Heart right ventricle (tissue), 16 donors: ENCODE measurements at regions of chr12 and their contacts with region 1.

Region 1: DNA sequence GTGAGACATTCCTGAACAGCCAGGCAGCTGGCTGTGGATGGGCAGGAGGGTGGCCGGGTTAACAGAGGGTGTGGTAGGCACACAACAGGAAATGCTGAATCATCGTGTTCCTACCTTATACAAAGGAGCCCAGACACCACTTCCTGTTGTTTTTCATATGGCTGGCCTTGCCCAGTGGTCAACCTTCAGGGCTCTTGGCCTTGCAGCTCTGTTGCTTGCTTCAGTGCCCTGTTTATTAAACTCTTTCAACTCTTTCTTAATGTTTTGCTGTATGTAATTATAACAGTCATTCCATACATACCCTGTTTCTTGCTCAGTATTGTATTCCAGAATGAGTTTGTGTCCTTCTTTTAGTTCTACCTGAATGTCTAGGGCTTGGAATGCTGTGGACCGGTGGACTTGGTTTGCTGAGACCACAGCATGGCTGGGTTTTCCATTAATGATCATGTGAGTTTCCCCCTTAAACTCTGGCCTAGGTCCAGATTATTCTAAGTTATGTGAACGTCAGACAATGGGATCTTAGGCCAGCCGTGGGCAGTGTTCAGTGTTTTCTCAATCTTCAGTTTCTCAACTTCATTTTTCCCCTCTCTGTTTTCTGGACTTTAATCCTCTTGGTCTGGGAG is 11.9 kb downstream of the CFAP54 start:
- DNase-seq: peak; percentile 36 to 42
- ATAC-seq: peak; percentile 61 to 95 (median 86)
- H3K4me3 ChIP-seq: no peak overlapping the region
- H3K27ac ChIP-seq: peak overlapping the region; percentile 42 to 88 (median 76)
- H3K4me1 ChIP-seq: peaks cover 4 to 36% (median 21%) of the 10 kb centered on the region in 9 donors
- H3K27me3 ChIP-seq: no peaks in the 10 kb centered on the region
- CTCF ChIP-seq: no peak

Region 2: GRCh38 chr12:96061864-96062453 is 439.3 kb before region 1 on chr12:
- intact Hi-C with region 1: loop called in 2 of 10 experiments (anchors 5 kb)
- DNase-seq: peak; percentile 37 to 80
- ATAC-seq: peak; percentile 75 to 89 (median 84)
- H3K4me3 ChIP-seq: no peak overlapping the region
- H3K27ac ChIP-seq: peak overlapping the region in 1 of 10 donors; percentile 36
- H3K4me1 ChIP-seq: peaks cover 0 to 32% (median 17%) of the 10 kb centered on the region in 9 donors
- H3K27me3 ChIP-seq: no peaks in the 10 kb centered on the region
- CTCF ChIP-seq: peak; percentile 79 to 91 (median 87)

Region 3: GRCh38 chr12:96219698-96220206 is 281.5 kb before region 1 on chr12:
- intact Hi-C with region 1: loop called in 1 of 10 experiments (anchors 10 kb)
- DNase-seq: no peak
- ATAC-seq: peak in 4 of 8 donors; percentile 10 to 57 (median 23)
- H3K4me3 ChIP-seq: no peak overlapping the region
- H3K27ac ChIP-seq: peak overlapping the region in 4 of 10 donors; percentile 8 to 60 (median 30)
- H3K4me1 ChIP-seq: peaks cover 0 to 95% (median 68%) of the 10 kb centered on the region in 9 donors
- H3K27me3 ChIP-seq: no peaks in the 10 kb centered on the region
- CTCF ChIP-seq: no peak

Region 4: DNA sequence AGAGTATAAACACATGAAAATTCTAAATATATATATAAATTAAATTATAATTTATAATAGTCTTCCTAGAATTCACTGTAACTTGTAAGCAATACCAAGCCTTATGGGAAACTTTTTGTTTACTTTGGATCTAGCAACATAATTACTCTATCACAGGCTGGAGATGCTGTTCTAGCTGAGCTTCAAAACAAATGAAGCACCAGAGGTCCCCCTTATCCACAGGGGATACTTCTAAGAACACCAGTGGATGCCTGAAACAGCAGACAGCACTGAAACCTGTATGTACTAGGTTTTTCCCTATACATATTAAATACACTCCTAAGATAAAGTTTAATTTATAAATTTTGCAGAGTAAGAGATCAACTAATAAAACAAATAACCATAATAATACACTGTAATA is 197.6 kb before region 1 on chr12:
- intact Hi-C with region 1: loop called in 1 of 10 experiments (anchors 10 kb)
- DNase-seq: no peak
- ATAC-seq: peak in 6 of 8 donors; percentile 38 to 67 (median 58)
- H3K4me3 ChIP-seq: no peak overlapping the region
- H3K27ac ChIP-seq: no peak overlapping the region
- H3K4me1 ChIP-seq: peaks cover 0 to 13% (median 6%) of the 10 kb centered on the region in 9 donors
- H3K27me3 ChIP-seq: no peaks in the 10 kb centered on the region
- CTCF ChIP-seq: peak in 3 of 9 donors; percentile 18 to 44 (median 29)

Region 5: DNA sequence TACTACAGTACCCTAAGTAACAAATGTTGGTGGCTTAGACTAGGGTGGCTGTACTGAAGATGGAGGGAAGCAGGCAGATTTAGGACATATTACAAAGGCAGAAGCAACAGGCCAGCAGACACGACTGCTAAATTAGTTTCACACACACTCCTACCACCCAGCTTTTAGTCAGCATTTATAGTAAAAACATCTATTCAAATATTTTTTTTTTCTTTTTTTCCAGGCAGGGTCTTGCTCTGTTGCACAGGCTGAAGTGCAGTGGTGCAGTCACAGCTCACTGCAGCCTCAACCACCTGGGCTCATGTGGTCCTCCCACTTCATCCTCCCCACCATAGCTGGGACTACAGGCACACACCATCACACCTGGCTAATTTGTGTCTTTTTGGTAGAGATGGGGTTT is 173.9 kb before region 1 on chr12:
- intact Hi-C with region 1: no loop called
- DNase-seq: no peak
- ATAC-seq: peak in 1 of 8 donors; percentile 20
- H3K4me3 ChIP-seq: no peak overlapping the region
- H3K27ac ChIP-seq: no peak overlapping the region
- H3K4me1 ChIP-seq: peaks cover 0 to 36% (median 15%) of the 10 kb centered on the region in 9 donors
- H3K27me3 ChIP-seq: no peaks in the 10 kb centered on the region
- CTCF ChIP-seq: no peak